ENCODE measurements at regions of chr11 and their contacts with region 1.

Region 1: GRCh38 chr11:85634747-85635146 is 6.4 kb downstream of the TMEM126B start:
- DNase-seq: no peak
- ATAC-seq: no peak
- H3K4me3 Mint-ChIP-seq: no peak overlapping the region
- H3K27ac Mint-ChIP-seq: no peak overlapping the region
- H3K4me1 Mint-ChIP-seq: peaks cover 9% of the 10 kb centered on the region
- H3K27me3 Mint-ChIP-seq: no peaks in the 10 kb centered on the region

Region 2: GRCh38 chr11:85647604-85648299 is 13.0 kb after region 1 on chr11 and contains the start of gene TMEM126A:
- POLR2A ChIA-PET with region 1: interaction called, 22 read pairs
- DNase-seq: peak; percentile 93
- ATAC-seq: peak; percentile 98
- H3K4me3 Mint-ChIP-seq: peak within 1 kb of the TSS; percentile 99
- H3K27ac Mint-ChIP-seq: peak within 1 kb of the TSS; percentile 99
- H3K4me1 Mint-ChIP-seq: peaks cover 27% of the 10 kb centered on the region
- H3K27me3 Mint-ChIP-seq: peaks cover 21% of the 10 kb centered on the region
- total RNA-seq, gene TMEM126A: 27.2 to 28.8 TPM

Region 3: DNA sequence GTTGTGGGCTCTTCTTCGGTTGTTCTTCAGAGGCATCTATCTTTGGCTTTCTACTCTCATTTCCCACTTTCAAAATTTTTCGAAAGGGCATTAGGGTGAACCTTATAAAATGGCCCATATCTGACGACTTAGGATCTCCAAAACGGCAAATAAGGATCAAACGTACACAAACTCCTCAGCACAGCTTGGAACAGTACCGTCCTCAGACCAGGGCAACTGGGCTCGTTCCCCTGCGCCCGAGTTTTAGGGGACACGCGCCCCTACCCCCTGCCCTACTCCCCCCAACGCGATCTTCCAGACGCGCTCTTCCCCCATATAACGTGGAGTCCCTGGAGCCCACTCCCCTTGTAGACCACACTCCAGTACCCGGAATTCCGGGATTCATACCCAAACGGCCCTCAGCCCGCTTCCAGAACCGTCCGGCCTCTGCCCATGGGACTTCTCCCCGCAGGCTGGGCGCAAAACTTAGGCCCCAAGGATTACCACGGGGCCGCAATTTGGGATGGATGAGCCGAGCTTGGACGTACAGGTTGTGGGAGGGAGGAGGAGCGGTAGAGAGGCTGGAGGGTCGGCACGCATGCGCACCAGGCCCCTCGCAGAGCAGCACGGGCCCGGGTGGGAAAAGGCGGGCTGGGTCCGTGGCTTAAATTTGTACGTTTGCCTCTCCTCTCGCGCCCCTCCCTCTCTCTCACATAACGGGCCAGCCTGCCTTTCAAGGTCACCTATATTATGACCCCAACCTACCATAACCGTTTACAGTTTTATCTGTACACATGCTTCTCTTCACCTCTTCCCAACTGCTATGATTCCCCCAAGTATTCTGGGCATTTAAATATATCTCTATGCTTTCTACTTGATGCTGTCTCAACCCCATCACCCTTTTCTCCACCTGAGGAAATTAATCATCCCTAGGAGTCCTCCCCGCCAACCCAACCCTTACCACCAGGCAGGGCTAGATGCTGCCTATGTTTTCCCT is 47.9 kb after region 1 on chr11:
- POLR2A ChIA-PET with region 1: no interaction called
- DNase-seq: peak; percentile 79
- ATAC-seq: peak; percentile 95
- H3K4me3 Mint-ChIP-seq: peak overlapping the region; percentile 88
- H3K27ac Mint-ChIP-seq: peak overlapping the region; percentile 84
- H3K4me1 Mint-ChIP-seq: peaks cover 14% of the 10 kb centered on the region
- H3K27me3 Mint-ChIP-seq: no peaks in the 10 kb centered on the region

Measured in activated naive CD8-positive, alpha-beta T cell treated with anti-CD3 and anti-CD28 coated beads, Interleukin-2, amount 10 ng/mL, durations not matched to agents 7 days and 5 days (primary cell).